Activated CD8-positive, alpha-beta T cell treated with anti-CD3 and anti-CD28 coated beads, Interleukin-2, amount 10 ng/mL, durations not matched to agents 7 days and 5 days (primary cell): ENCODE measurements at regions of chr5 and their contacts with region 1.

Region 1: DNA sequence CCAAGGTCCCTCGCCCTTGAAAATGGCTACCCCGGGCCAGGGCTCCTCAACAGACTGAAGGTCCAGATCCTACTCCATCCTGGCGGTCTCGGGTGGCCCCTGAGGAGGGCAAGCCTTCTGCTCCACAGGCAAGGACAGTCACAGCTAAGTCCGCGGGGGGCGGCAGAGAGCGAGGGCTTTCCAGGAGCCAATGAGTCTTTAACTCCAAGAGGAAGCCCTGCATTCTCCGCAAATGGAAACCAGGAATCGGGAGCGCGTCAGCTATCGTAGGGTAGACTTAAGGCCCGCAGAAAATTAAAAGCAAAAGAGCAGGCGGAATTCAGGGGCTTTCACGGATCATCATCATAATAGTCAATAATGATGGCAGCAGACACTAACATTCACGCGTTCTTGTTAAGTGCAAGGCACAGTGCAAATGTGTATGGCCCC is 87.8 kb upstream of the TNFAIP8 start:
- DNase-seq: peak; percentile 94
- ATAC-seq: peak; percentile 70
- H3K4me3 Mint-ChIP-seq: peak overlapping the region; percentile 98
- H3K27ac Mint-ChIP-seq: peak overlapping the region; percentile 96
- H3K4me1 Mint-ChIP-seq: peaks cover 56% of the 10 kb centered on the region
- H3K27me3 Mint-ChIP-seq: no peaks in the 10 kb centered on the region

Region 2: DNA sequence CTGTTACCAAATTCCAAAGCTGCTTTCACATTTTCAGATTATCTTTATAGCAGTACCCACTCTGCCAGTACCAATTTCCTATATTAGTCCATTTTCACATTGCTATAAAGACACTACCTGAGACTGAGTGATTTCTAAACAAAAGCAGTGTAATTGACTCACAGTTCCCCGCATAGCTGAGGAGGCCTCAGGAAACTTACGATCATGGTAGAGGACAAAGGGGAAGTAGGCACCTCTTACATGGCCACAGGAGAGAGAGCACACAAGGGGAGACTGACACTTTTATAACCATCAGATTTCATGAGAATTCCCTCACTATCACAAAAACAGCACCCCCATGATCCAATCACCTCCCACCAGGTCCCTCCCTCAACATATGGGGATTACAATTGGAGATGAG is 384.6 kb before region 1 on chr5:
- CTCF ChIA-PET with region 1: no interaction called
- POLR2A ChIA-PET with region 1: no interaction called
- DNase-seq: no peak
- ATAC-seq: no peak
- H3K4me3 Mint-ChIP-seq: no peak overlapping the region
- H3K27ac Mint-ChIP-seq: no peak overlapping the region
- H3K4me1 Mint-ChIP-seq: no peaks in the 10 kb centered on the region
- H3K27me3 Mint-ChIP-seq: no peaks in the 10 kb centered on the region

Region 3: GRCh38 chr5:119070828-119071572 is 197.0 kb before region 1 on chr5 and contains the start of gene DMXL1:
- CTCF ChIA-PET with region 1: interaction called, 14 read pairs
- POLR2A ChIA-PET with region 1: interaction called, 13 read pairs
- DNase-seq: peak; percentile 99
- ATAC-seq: peak; percentile 91
- H3K4me3 Mint-ChIP-seq: peak within 1 kb of the TSS; percentile 95
- H3K27ac Mint-ChIP-seq: peak within 1 kb of the TSS; percentile 96
- H3K4me1 Mint-ChIP-seq: peaks cover 36% of the 10 kb centered on the region
- H3K27me3 Mint-ChIP-seq: no peaks in the 10 kb centered on the region
- total RNA-seq, gene DMXL1: 32.3 to 33.9 TPM

Region 4: GRCh38 chr5:119290161-119290569 is 22.2 kb after region 1 on chr5:
- CTCF ChIA-PET with region 1: interaction called, 52 read pairs
- POLR2A ChIA-PET with region 1: interaction called, 10 read pairs
- DNase-seq: no peak
- ATAC-seq: peak; percentile 34
- H3K4me3 Mint-ChIP-seq: peak overlapping the region; percentile 48
- H3K27ac Mint-ChIP-seq: peak overlapping the region; percentile 94
- H3K4me1 Mint-ChIP-seq: peaks cover 90% of the 10 kb centered on the region
- H3K27me3 Mint-ChIP-seq: no peaks in the 10 kb centered on the region